Heart right ventricle (tissue), 16 donors: ENCODE measurements at regions of chr20 and their contacts with region 1.

Region 1: GRCh38 chr20:11204926-11205768 is 531.3 kb upstream of the JAG1 start:
- DNase-seq: peak; percentile 19 to 79
- ATAC-seq: peak; percentile 91 to 98 (median 95)
- H3K4me3 ChIP-seq: no peak overlapping the region
- H3K27ac ChIP-seq: peak overlapping the region in 5 of 10 donors; percentile 2 to 61 (median 33)
- H3K4me1 ChIP-seq: peaks cover 0 to 15% (median 7%) of the 10 kb centered on the region in 9 donors
- H3K27me3 ChIP-seq: no peaks in the 10 kb centered on the region
- CTCF ChIP-seq: peak; percentile 65 to 91 (median 85)

Region 2: GRCh38 chr20:10686356-10687133 is 518.6 kb before region 1 on chr20:
- intact Hi-C with region 1: loop called in 1 of 10 experiments (anchors 10 kb)
- DNase-seq: no peak
- ATAC-seq: no peak
- H3K4me3 ChIP-seq: no peak overlapping the region
- H3K27ac ChIP-seq: no peak overlapping the region
- H3K4me1 ChIP-seq: no peaks in the 10 kb centered on the region
- H3K27me3 ChIP-seq: no peaks in the 10 kb centered on the region
- CTCF ChIP-seq: no peak

Region 3: DNA sequence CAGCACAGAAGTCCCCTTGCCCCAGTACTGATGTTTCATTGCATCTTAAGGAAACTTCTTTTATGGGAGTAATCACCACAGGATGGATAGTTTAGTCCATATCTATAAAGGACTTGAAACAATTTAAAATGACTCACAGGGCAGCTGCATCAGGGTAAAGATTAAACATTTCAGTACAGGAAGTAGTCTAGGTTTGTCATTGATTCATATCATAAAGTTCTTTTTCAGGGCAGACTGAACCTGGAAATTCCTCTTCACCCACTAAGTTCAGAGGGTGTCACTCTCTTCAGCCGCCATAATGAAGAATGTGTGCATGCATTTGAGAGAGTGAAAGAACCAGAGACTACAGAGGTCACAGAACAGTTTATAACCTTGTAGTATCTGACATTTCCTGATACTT is 235.0 kb before region 1 on chr20:
- intact Hi-C with region 1: no loop called
- DNase-seq: no peak
- ATAC-seq: no peak
- H3K4me3 ChIP-seq: no peak overlapping the region
- H3K27ac ChIP-seq: no peak overlapping the region
- H3K4me1 ChIP-seq: peaks cover 0 to 23% (median under 1%) of the 10 kb centered on the region in 9 donors
- H3K27me3 ChIP-seq: no peaks in the 10 kb centered on the region
- CTCF ChIP-seq: no peak

Region 4: DNA sequence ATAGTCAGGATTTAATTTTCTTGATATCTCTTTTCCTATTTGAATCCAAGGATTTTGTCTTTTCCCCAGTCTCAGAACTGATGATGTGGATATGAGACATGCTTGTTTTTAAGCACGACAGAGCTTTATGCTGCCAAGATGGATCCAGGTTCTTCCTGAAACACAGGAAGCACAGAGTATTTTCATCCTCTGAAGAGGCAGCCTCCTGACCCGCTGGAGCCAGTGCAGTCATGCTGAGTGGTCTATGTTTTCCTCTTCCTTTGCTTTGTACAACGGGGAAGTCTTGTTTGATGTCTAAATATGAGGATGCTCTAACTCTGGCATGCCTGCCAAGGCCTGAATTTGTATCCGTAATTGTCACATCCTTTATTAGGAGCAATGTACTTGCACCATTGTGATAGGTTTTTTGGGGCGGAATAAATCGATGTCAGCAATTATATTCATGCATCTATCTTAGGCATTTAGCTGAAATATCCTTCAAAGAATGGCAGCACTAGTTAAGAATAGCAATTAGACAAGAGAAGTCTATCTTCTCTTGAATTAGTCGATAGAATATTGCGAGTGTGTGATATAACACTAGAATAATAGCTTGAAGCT is 124.3 kb before region 1 on chr20:
- intact Hi-C with region 1: loop called in 1 of 10 experiments (anchors 5 kb)
- DNase-seq: peak in 1 of 2 donors; percentile 11
- ATAC-seq: peak in 7 of 8 donors; percentile 17 to 88 (median 58)
- H3K4me3 ChIP-seq: no peak overlapping the region
- H3K27ac ChIP-seq: peak overlapping the region in 3 of 10 donors; percentile 25 to 62 (median 46)
- H3K4me1 ChIP-seq: peaks cover 0 to 17% (median 7%) of the 10 kb centered on the region in 9 donors
- H3K27me3 ChIP-seq: no peaks in the 10 kb centered on the region
- CTCF ChIP-seq: no peak

Region 5: GRCh38 chr20:11098888-11099287 is 106.3 kb before region 1 on chr20:
- intact Hi-C with region 1: loop called in 1 of 10 experiments (anchors 10 kb)
- DNase-seq: no peak
- ATAC-seq: peak in 1 of 8 donors; percentile 47
- H3K4me3 ChIP-seq: no peak overlapping the region
- H3K27ac ChIP-seq: no peak overlapping the region
- H3K4me1 ChIP-seq: peaks cover 0 to 11% (median 0%) of the 10 kb centered on the region in 9 donors
- H3K27me3 ChIP-seq: no peaks in the 10 kb centered on the region
- CTCF ChIP-seq: peak in 6 of 9 donors; percentile 14 to 38 (median 25)

Region 6: DNA sequence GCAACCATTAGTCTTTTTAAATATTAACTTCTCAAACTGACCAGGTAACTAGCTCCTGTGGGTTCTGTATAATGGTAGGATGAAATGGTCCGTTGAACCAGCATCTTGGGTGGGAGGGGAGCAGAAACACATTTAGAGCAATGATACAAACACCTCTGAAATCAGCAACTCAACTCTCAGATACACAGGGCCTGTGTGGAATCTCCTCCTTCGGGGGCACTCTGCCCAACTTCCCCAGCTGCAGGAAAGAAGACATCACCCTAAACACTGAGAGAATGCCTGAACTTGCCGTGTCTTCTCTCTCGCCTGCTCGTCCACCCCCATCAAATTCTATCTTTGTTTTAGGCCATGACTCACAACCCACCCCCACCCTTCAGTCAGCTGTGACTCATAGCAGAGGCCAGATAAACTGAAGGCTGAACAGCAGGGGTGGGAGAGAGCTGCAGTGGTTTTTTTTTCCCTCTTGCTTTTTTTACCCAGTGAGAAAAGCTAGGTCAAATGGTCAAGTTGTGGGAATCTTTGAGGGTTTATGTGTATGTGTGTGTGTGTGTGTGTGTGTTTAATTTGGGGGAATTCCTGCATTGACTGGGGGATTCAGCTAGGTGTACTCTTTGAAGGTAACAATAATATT is 62.1 kb after region 1 on chr20:
- intact Hi-C with region 1: loop called in 4 of 10 experiments (anchors 5 to 10 kb)
- DNase-seq: peak; percentile 15 to 69
- ATAC-seq: peak; percentile 79 to 96 (median 93)
- H3K4me3 ChIP-seq: no peak overlapping the region
- H3K27ac ChIP-seq: peak overlapping the region in 8 of 10 donors; percentile 9 to 65 (median 47)
- H3K4me1 ChIP-seq: peaks cover 6 to 24% (median 17%) of the 10 kb centered on the region in 9 donors
- H3K27me3 ChIP-seq: no peaks in the 10 kb centered on the region
- CTCF ChIP-seq: peak in 3 of 9 donors; percentile 8 to 14 (median 12)

Region 7: DNA sequence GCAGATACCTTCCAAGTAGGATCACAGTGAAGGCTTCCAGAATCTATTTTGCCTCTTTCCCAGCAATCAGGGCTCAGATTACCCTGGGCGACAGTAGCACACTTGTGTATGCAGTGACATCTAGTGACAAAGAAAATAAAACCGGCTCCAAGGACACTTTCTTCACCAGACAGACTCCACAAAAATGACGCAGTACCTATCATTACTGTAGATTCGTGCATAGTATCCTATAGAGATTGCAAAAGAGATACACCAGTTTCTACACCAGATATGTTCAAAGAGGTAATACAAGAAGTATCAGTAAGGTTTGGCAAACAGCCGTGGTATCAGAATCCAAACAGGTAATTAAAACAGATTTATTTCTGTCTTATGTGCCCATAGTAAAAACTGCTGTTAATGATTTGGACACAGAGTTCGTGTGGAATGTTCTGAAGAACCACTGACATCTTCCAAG is 69.0 kb after region 1 on chr20:
- intact Hi-C with region 1: loop called in 4 of 10 experiments (anchors 5 to 10 kb)
- DNase-seq: peak in 1 of 2 donors; percentile 45
- ATAC-seq: peak; percentile 69 to 95 (median 92)
- H3K4me3 ChIP-seq: no peak overlapping the region
- H3K27ac ChIP-seq: no peak overlapping the region
- H3K4me1 ChIP-seq: peaks cover 0 to 9% (median 5%) of the 10 kb centered on the region in 9 donors
- H3K27me3 ChIP-seq: no peaks in the 10 kb centered on the region
- CTCF ChIP-seq: peak; percentile 51 to 86 (median 73)

Region 8: DNA sequence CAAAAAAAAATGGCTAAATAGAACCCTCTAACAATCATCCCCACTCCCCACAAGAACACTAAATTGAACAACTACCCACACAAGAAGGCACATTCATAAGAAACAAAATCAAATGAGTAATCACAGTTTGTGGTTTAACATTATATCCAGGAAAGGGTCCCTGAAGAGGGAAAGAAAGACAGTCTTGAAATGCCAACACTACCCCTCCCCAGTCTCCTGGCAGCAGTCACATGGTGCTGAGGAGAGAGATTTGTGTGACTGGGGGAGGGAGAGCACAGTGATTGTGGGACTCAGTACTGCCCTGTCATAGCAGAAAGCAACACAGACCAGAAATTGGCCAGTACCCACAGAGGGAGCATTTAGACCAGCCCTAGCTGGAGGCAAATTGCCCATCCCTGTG is 268.8 kb after region 1 on chr20:
- intact Hi-C with region 1: no loop called
- DNase-seq: no peak
- ATAC-seq: no peak
- H3K4me3 ChIP-seq: no peak overlapping the region
- H3K27ac ChIP-seq: no peak overlapping the region
- H3K4me1 ChIP-seq: no peaks in the 10 kb centered on the region
- H3K27me3 ChIP-seq: peaks cover 0 to 7% (median 0%) of the 10 kb centered on the region in 7 donors
- CTCF ChIP-seq: no peak

Region 9: GRCh38 chr20:11529047-11529446 is 323.9 kb after region 1 on chr20:
- intact Hi-C with region 1: no loop called
- DNase-seq: no peak
- ATAC-seq: no peak
- H3K4me3 ChIP-seq: no peak overlapping the region
- H3K27ac ChIP-seq: no peak overlapping the region
- H3K4me1 ChIP-seq: no peaks in the 10 kb centered on the region
- H3K27me3 ChIP-seq: no peaks in the 10 kb centered on the region
- CTCF ChIP-seq: no peak